A673 (cell line): ENCODE measurements at regions of chr4 and their contacts with region 1.

Region 1: DNA sequence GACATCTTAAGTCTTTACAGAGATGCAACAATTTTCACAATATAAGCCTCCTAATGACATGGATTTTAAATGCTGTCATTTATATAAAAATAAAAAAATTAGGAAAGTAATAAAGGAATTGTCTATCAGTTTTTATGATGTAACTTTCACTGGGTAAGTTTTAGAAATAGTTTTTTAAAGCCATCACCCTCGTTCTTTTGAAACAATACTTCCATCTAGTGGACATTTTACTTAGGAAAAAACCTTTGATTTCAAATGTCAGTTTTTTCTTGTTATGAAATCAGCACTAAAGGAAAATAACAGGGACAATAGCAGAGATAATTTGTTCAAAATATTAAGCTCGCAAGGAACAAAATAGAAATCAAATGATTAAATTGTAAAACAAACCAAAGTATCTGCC is 24.3 kb upstream of the NDNF start:
- DNase-seq: peak; percentile 70
- H3K4me3 ChIP-seq: no peak overlapping the region
- H3K27ac ChIP-seq: no peak overlapping the region
- H3K4me1 ChIP-seq: no peaks in the 10 kb centered on the region
- H3K27me3 ChIP-seq: no peaks in the 10 kb centered on the region
- CTCF ChIP-seq: peak; percentile 66

Region 2: GRCh38 chr4:120071192-120071795 is 1025.3 kb before region 1 on chr4:
- CTCF ChIA-PET with region 1: no interaction called
- POLR2A ChIA-PET with region 1: no interaction called
- intact Hi-C with region 1: loop called (anchors 5 kb)
- DNase-seq: peak; percentile 70
- H3K4me3 ChIP-seq: no peak overlapping the region
- H3K27ac ChIP-seq: no peak overlapping the region
- H3K4me1 ChIP-seq: peaks cover 10% of the 10 kb centered on the region
- H3K27me3 ChIP-seq: no peaks in the 10 kb centered on the region
- CTCF ChIP-seq: peak; percentile 70

Region 3: DNA sequence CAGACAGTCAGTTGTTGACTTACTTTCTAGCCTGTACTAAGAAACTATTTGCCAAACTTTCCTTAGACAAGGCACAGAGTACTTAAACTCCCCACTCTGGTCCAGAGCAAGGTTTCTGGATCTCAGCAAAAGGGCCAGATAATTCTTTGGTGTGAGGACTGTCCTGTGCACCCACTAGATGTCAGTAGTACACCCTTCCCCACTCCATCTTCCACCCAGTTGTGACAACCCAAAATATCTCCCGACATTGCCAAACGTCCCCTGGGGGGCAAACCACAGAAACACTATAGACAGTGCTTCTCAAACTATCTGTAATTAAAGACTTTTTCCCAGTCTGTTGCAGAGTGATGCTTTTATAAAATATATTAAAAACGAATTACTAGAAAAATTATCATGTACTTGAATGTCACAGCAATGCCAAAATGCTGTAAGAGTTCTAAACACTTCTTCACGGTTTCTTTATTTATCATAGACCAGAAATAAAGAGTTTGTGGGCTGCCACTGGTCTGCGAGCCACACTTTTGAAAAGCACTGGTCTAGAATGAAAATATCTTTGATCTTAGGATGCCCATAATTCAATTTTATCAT is 377.6 kb before region 1 on chr4:
- CTCF ChIA-PET with region 1: no interaction called
- POLR2A ChIA-PET with region 1: no interaction called
- intact Hi-C with region 1: loop called (anchors 2 kb)
- DNase-seq: peak; percentile 62
- H3K4me3 ChIP-seq: no peak overlapping the region
- H3K27ac ChIP-seq: no peak overlapping the region
- H3K4me1 ChIP-seq: no peaks in the 10 kb centered on the region
- H3K27me3 ChIP-seq: no peaks in the 10 kb centered on the region
- CTCF ChIP-seq: peak; percentile 76

Region 4: DNA sequence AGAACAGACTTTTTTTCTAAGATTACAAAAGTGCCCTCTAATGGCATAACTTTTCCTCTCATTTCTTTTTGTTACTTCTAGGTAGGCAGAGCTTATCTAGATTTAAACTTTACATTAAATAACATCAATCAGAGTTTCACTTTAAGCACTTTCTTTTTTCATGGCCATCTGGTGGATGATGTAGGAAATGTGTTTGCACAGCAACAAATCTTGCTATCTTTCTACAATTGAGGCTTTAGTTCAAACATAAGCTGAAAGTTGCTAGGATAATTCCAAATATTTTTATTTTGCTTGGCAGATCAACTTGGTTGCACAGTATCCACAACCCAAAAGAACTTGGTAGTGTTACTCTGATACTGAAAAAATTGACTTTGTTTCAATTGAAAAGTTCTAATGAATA is 46.3 kb before region 1 on chr4:
- CTCF ChIA-PET with region 1: no interaction called
- POLR2A ChIA-PET with region 1: no interaction called
- intact Hi-C with region 1: no loop called
- DNase-seq: peak; percentile 52
- H3K4me3 ChIP-seq: no peak overlapping the region
- H3K27ac ChIP-seq: no peak overlapping the region
- H3K4me1 ChIP-seq: peaks cover 32% of the 10 kb centered on the region
- H3K27me3 ChIP-seq: no peaks in the 10 kb centered on the region
- CTCF ChIP-seq: peak; percentile 57

Region 5: DNA sequence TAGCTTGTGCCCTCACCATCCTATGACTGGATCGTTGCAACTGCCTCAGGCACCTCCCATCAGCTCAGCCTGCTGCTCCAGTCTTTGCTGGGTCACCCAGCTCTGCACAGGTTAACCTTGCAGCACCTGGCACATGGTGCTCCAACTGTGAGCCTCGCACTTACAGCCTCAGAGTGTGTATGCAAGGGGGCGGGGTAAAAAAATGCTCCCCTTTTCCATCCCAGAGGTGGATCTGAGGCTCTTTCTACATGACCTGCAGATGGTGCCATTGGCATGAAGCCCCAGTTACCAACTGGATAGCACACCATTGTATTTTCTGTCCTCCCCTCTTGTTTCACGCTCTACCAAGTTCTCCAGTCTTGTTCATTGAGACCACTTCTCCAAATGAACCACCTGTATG is 901.4 kb after region 1 on chr4:
- CTCF ChIA-PET with region 1: no interaction called
- POLR2A ChIA-PET with region 1: no interaction called
- intact Hi-C with region 1: no loop called
- DNase-seq: peak; percentile 48
- H3K4me3 ChIP-seq: no peak overlapping the region
- H3K27ac ChIP-seq: no peak overlapping the region
- H3K4me1 ChIP-seq: no peaks in the 10 kb centered on the region
- H3K27me3 ChIP-seq: no peaks in the 10 kb centered on the region
- CTCF ChIP-seq: peak; percentile 42; the same call in 1 of the 2 replicates